ENCODE measurements at regions of chr1 and their contacts with region 1.

Region 1: DNA sequence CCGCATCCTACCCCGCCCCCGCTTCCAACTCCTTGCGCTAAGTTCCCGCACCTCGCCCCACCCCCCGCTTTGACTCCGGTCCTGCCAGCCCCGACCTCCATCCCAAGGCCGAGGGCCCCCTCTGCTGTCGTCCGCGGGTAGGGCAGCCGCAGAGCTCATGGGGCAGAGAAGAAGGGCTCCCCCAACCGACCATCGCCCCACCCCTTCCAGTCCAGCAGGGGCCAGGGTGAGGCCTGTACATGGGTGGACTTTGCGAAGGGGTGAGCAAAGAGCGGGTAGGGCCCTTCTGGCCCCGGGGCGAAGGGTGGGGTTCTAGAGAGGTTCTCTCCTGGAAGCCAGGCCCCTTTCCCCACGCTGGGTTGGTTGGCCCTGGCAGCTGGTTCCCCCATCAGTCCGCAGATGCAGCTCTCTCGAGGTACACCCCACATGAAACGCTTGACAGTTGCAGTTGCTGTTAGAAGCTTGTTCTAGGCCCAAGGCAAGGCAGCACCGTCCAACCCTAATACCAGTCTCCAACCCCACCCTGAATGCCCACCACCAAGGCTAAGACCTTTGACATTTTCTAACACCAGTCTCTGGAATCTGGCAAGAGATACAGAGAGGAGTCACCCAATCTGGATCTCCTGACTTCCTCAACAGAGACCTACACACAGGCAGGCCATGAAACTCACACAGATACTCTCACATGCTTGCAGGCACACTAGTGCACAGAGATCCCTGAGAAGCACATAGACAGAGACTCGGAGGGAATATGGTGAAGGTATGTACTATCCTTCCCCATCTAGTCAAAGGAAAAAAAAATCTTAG is 25.3 kb upstream of the ADGRB2 start:
- DNase-seq: peak; percentile 100
- ATAC-seq: peak; percentile 82
- H3K4me3 Mint-ChIP-seq: peak overlapping the region; percentile 83
- H3K27ac Mint-ChIP-seq: no peak overlapping the region
- H3K4me1 Mint-ChIP-seq: peaks cover 11% of the 10 kb centered on the region
- H3K27me3 Mint-ChIP-seq: no peaks in the 10 kb centered on the region
- CTCF ChIP-seq: peak; percentile 70

Region 2: DNA sequence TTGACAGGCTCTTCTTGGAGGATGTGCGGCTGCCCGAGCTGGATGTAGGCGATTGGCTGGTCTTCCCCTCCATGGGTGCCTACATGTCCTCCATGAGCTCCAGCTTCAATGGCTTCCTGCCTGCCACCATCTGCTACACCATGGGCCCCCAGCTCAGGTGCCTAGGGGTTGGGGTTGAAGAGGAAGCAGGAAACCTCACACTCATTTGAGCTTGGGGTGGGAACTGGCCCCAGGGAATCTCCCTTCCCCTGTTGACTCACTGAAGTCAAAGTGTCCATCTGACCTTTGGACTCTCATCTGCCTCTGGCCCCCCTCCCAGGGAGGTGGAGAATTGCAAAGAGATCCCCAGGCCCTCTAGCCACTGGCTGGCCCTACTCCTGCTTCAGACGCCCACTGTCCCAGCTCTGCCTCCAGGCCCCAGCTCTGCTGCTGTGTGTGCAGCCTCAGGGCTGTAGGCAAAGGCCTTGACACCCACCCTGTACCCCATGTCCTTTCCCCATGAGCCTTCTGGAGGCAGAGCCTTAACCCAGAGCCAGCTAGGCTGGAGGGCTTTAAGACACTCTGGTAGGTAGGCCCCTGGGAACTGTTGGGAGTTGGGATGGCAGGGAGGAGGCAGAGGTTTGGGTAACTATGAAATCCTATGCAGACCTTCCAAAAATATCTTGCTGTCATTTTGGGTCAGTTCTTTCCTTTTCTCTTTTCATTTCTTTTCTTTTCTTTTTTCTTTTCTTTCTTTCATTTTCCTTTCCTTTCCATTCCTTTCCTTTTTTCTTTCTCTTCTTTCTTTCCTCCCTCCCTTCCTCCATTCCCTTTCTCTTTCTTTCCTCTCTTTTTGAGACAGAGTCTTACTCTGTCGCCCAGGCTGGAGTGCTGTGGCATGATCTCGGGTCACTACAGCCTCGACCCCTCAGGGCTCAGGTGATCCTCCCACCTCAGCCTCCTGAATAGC is 280.1 kb before region 1 on chr1:
- CTCF ChIA-PET with region 1: no interaction called
- POLR2A ChIA-PET with region 1: no interaction called
- DNase-seq: no peak
- ATAC-seq: no peak
- H3K4me3 Mint-ChIP-seq: no peak overlapping the region
- H3K27ac Mint-ChIP-seq: no peak overlapping the region
- H3K4me1 Mint-ChIP-seq: peaks cover 19% of the 10 kb centered on the region
- H3K27me3 Mint-ChIP-seq: no peaks in the 10 kb centered on the region; the same call in 1 of the 2 replicates
- CTCF ChIP-seq: no peak

Region 3: GRCh38 chr1:31571340-31572295 is 217.8 kb before region 1 on chr1:
- CTCF ChIA-PET with region 1: no interaction called
- POLR2A ChIA-PET with region 1: no interaction called
- DNase-seq: no peak
- ATAC-seq: no peak
- H3K4me3 Mint-ChIP-seq: no peak overlapping the region
- H3K27ac Mint-ChIP-seq: no peak overlapping the region
- H3K4me1 Mint-ChIP-seq: peaks cover 17% of the 10 kb centered on the region
- H3K27me3 Mint-ChIP-seq: no peaks in the 10 kb centered on the region; the same call in none of the 2 replicates
- CTCF ChIP-seq: no peak

Region 4: GRCh38 chr1:31595836-31596736 is 193.4 kb before region 1 on chr1:
- CTCF ChIA-PET with region 1: no interaction called
- POLR2A ChIA-PET with region 1: no interaction called
- DNase-seq: no peak
- ATAC-seq: no peak
- H3K4me3 Mint-ChIP-seq: no peak overlapping the region
- H3K27ac Mint-ChIP-seq: no peak overlapping the region
- H3K4me1 Mint-ChIP-seq: no peaks in the 10 kb centered on the region
- H3K27me3 Mint-ChIP-seq: peaks cover 4% of the 10 kb centered on the region; the same call in 1 of the 2 replicates
- CTCF ChIP-seq: no peak

Region 5: DNA sequence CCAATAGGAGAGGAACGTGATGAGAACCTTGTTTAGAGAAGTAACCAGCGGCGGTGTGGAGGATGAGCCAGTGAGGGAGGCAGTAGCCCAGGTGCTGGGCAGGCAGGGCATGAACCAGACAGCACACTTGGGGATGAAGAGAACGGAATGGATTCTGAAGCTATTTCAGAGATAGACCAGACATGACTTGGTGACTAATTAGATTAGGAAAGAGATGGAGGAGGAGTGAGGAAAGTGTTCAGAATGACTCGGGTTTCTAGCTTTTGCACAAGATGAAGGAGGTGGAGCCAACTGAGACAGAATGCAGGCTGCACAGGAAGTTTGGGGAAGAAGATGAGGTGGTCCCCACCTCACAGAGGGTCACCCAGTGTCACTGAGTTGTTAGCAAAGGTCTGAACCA is 149.9 kb before region 1 on chr1:
- CTCF ChIA-PET with region 1: interaction called, 28 read pairs
- POLR2A ChIA-PET with region 1: no interaction called
- DNase-seq: no peak
- ATAC-seq: no peak
- H3K4me3 Mint-ChIP-seq: no peak overlapping the region
- H3K27ac Mint-ChIP-seq: no peak overlapping the region
- H3K4me1 Mint-ChIP-seq: peaks cover 12% of the 10 kb centered on the region
- H3K27me3 Mint-ChIP-seq: no peaks in the 10 kb centered on the region
- CTCF ChIP-seq: no peak

Region 6: GRCh38 chr1:31669786-31670592 is 119.5 kb before region 1 on chr1:
- CTCF ChIA-PET with region 1: interaction called, 90 read pairs
- POLR2A ChIA-PET with region 1: no interaction called
- DNase-seq: no peak
- ATAC-seq: peak; percentile 59
- H3K4me3 Mint-ChIP-seq: peak overlapping the region; percentile 18; the same call in 1 of the 2 replicates
- H3K27ac Mint-ChIP-seq: 0 out of 2 replicates have a peak overlapping the region, but pooled peaks have one; percentile 16
- H3K4me1 Mint-ChIP-seq: peaks cover 19% of the 10 kb centered on the region
- H3K27me3 Mint-ChIP-seq: no peaks in the 10 kb centered on the region
- CTCF ChIP-seq: no peak

Region 7: GRCh38 chr1:31715087-31715872 is 74.2 kb before region 1 on chr1:
- CTCF ChIA-PET with region 1: interaction called, 180 read pairs
- POLR2A ChIA-PET with region 1: interaction called, 13 read pairs
- DNase-seq: peak; percentile 99
- ATAC-seq: peak; percentile 92
- H3K4me3 Mint-ChIP-seq: peak overlapping the region; percentile 92
- H3K27ac Mint-ChIP-seq: peak overlapping the region; percentile 98
- H3K4me1 Mint-ChIP-seq: peaks cover 22% of the 10 kb centered on the region
- H3K27me3 Mint-ChIP-seq: peaks cover 4% of the 10 kb centered on the region
- CTCF ChIP-seq: peak; percentile 75

Region 8: DNA sequence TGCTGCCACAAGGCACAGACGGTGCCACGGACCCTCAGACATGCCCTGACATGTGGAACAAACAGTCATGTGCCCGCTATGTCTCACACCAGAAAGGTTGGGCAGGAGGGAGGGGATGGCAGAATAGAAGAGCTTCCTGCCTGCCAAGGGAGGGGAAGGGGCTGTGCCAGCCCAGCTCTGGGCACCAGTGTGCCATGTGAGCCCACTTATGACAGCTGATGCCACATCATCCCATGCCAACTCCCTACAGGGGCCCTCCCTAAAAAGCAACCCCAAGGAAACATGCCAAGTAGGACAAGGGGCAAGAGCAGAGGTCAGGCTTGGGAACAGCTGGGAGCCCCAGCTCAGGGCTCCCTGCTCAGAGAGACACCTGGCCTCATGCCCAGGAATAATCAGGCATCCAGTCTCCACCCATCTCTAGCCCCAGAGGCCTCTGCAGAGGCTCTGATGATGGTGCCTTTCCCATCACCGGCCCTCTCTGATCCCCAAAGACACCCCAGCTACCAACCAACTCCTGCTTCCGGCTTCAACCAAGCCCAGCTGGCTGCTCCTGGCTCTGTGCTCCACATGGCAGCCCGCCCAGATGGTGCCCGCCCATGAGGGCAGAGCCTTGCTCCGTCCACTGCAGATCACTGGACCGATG is 35.6 kb before region 1 on chr1:
- CTCF ChIA-PET with region 1: interaction called, 282 read pairs
- POLR2A ChIA-PET with region 1: no interaction called
- DNase-seq: no peak
- ATAC-seq: no peak
- H3K4me3 Mint-ChIP-seq: no peak overlapping the region
- H3K27ac Mint-ChIP-seq: no peak overlapping the region
- H3K4me1 Mint-ChIP-seq: peaks cover 47% of the 10 kb centered on the region
- H3K27me3 Mint-ChIP-seq: no peaks in the 10 kb centered on the region; the same call in 1 of the 2 replicates
- CTCF ChIP-seq: no peak

Region 9: DNA sequence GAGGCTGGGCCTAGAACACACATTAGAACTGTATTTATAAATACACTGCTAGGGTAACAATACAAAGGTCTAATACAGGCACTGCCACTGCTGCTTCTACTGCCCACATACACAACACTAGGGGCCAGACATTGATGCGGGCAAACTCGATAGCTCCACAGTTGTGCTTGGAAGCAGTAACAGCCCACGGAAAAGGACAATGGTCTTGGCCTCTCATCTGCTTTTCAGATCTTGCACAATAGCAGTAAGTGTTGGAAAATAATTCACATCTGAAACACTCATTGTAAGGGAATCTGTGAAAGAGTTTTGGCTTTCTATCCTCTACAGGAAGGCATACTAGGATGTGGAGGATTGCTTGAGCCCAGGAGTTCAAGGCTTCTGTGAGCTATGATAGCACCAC is 33.3 kb after region 1 on chr1:
- CTCF ChIA-PET with region 1: interaction called, 13 read pairs
- POLR2A ChIA-PET with region 1: no interaction called
- DNase-seq: no peak
- ATAC-seq: no peak
- H3K4me3 Mint-ChIP-seq: no peak overlapping the region
- H3K27ac Mint-ChIP-seq: no peak overlapping the region
- H3K4me1 Mint-ChIP-seq: no peaks in the 10 kb centered on the region
- H3K27me3 Mint-ChIP-seq: no peaks in the 10 kb centered on the region
- CTCF ChIP-seq: no peak